MCF 10A (cell line): ENCODE measurements at regions of chr17 and their contacts with region 1.

Region 1: DNA sequence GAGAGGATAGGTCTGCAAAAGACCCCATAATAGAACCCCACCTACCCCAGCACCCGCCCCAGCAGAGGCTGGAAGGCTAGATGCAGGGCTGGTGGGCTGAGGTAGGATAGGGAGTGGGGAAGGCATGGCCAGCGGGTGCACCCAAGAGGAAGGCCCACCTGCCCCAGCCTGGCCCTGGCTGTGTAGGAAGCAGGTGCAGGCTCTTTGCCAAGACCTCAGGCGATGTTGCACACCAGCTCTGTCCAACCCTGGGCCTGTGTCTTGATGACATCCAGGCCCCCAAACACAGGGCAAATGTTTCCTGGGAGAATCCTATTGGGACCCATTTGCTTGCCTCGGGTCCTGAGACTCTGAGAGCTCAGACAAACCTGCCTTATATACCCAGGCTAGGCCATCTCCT is 12.2 kb downstream of the UNC119 start:
- DNase-seq: no peak
- H3K4me3 Mint-ChIP-seq: no peak overlapping the region
- H3K27ac Mint-ChIP-seq: no peak overlapping the region
- H3K4me1 Mint-ChIP-seq: peaks cover 5% of the 10 kb centered on the region
- H3K27me3 Mint-ChIP-seq: peaks cover 12% of the 10 kb centered on the region
- CTCF ChIP-seq: no peak

Region 2: DNA sequence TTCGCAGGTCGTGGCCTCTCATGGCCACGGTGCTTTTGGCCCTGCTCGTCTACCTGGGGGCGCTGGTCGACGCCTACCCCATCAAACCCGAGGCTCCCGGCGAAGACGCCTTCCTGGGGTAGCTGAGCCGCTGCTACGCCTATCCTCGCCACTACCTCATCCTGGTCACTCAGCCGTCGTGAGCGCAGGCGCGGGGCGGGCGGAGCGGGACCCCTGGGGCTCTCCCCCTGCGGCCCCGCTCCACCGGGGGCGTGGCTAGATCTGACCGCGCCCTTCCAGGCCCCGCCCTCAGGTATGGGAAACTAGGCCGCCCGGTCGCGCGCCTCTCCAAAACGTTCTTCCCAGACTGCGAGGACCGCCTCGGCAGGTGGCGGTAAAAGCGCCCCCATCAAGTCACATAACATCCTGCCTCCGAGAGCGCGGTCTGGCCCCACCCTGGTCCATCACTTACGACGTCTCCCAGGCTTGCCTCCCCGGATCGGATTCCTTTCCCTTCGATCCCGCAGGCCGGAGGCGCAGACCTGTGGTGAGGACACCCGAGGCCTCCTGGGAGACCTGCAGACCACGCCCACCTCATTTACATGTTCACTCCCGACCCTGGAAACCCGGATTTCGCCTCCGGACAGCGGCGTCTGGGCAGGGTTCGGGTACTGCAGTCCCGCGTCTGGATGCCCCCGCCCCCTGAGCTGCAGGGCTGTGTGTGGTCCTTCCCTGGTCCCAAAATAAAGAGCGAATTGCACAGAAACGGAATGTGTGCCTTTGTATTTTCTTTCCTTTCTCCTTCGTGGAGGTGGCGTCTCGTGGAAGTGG is 312.7 kb before region 1 on chr17:
- CTCF ChIA-PET with region 1: interaction called, 4 read pairs
- POLR2A ChIA-PET with region 1: no interaction called
- intact Hi-C with region 1: loop called (anchors 5 kb)
- DNase-seq: peak; percentile 83
- H3K4me3 Mint-ChIP-seq: peak overlapping the region; percentile 88
- H3K27ac Mint-ChIP-seq: peak overlapping the region; percentile 94
- H3K4me1 Mint-ChIP-seq: peaks cover 5% of the 10 kb centered on the region
- H3K27me3 Mint-ChIP-seq: no peaks in the 10 kb centered on the region
- CTCF ChIP-seq: no peak

Region 3: GRCh38 chr17:28500712-28501379 is 39.4 kb before region 1 on chr17:
- CTCF ChIA-PET with region 1: interaction called, 98 read pairs
- POLR2A ChIA-PET with region 1: interaction called, 3 read pairs
- intact Hi-C with region 1: no loop called
- DNase-seq: no peak
- H3K4me3 Mint-ChIP-seq: no peak overlapping the region
- H3K27ac Mint-ChIP-seq: no peak overlapping the region
- H3K4me1 Mint-ChIP-seq: peaks cover 7% of the 10 kb centered on the region
- H3K27me3 Mint-ChIP-seq: peaks cover 12% of the 10 kb centered on the region
- CTCF ChIP-seq: no peak

Region 4: DNA sequence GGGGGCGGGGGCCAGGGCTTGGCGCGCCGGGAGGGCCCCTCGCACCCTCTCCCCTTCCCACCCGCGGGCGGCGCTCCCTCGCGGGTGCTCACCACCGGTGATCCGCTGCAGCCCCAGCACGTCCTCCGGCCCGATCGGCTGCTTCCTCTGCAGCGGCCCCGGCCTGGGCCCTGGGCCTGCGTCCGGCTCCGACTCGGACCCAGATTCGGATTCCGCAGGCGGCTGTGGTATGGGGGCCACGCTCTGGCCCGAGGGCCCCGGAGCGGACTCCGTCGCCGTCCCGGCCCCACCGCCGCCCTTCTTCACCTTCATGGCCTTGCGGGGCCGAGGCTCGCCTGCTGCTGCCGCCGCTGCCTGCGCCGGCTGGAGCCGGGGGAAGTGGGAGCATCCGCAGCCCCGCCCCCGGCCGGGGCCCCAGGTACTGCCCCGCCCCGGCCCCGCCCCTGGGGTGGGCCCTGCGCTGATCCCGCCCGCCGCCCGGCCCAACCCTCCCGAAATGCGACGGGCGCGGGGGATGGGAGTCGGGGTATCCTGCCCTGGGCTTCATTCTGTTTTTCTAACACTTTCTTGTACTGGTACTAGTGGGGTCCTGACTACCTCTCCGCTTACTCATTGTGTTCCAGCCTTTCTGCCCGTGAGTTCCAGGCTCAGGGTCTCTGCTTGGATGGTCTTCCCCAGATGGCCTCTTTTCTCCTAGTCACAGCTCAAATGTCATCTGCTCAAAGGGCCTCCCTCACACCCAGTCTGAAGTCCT is 12.2 kb after region 1 on chr17 and contains the start of gene UNC119:
- CTCF ChIA-PET with region 1: interaction called, 35 read pairs
- POLR2A ChIA-PET with region 1: no interaction called
- intact Hi-C with region 1: no loop called
- DNase-seq: peak; percentile 74
- H3K4me3 Mint-ChIP-seq: peak within 1 kb of the TSS; percentile 75
- H3K27ac Mint-ChIP-seq: no peak within 1 kb of the TSS
- H3K4me1 Mint-ChIP-seq: no peaks in the 10 kb centered on the region
- H3K27me3 Mint-ChIP-seq: no peaks in the 10 kb centered on the region
- CTCF ChIP-seq: no peak
- total RNA-seq, gene UNC119: 12.5 and 13.7 TPM in 2 replicates

Region 5: GRCh38 chr17:28592260-28592659 is 52.0 kb after region 1 on chr17:
- CTCF ChIA-PET with region 1: no interaction called
- POLR2A ChIA-PET with region 1: no interaction called
- intact Hi-C with region 1: no loop called
- DNase-seq: no peak
- H3K4me3 Mint-ChIP-seq: no peak overlapping the region
- H3K27ac Mint-ChIP-seq: no peak overlapping the region
- H3K4me1 Mint-ChIP-seq: peaks cover under 1% of the 10 kb centered on the region
- H3K27me3 Mint-ChIP-seq: no peaks in the 10 kb centered on the region
- CTCF ChIP-seq: no peak